Caco-2 (cell line): ENCODE measurements at regions of chr4 and their contacts with region 1.

Region 1: DNA sequence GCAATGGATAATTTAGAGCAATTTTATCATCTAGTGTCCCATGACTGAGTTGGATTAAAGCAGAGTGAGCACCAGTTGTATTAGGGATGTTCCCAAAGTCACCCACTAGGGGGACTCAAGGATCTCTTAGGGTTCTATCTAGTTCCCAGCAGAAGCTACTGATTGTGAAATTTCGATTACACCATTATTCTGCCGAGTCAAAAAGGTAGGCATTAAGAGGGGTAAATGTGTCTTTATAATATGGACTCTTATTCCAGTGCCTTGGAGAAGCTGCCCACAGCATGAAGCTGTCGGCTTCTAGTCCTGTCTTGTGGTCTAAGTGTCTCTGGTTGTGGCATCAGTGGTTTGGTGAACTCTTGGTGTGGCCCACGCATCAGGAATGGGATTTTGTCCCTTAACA is 53.3 kb downstream of the RGS12 start:
- DNase-seq: peak in 1 of 2 experiments; percentile 72
- H3K4me3 ChIP-seq: no peak overlapping the region
- H3K4me3 Mint-ChIP-seq: no peak overlapping the region
- H3K27ac Mint-ChIP-seq: no peak overlapping the region
- H3K4me1 ChIP-seq: no peaks in the 10 kb centered on the region
- H3K4me1 Mint-ChIP-seq: no peaks in the 10 kb centered on the region
- H3K27me3 ChIP-seq: no peaks in the 10 kb centered on the region
- H3K27me3 Mint-ChIP-seq: no peaks in the 10 kb centered on the region
- CTCF ChIP-seq: peak; percentile 69 to 77

Region 2: GRCh38 chr4:3442959-3443749 is 97.0 kb after region 1 on chr4:
- CTCF ChIA-PET with region 1: no interaction called
- POLR2A ChIA-PET with region 1: no interaction called
- intact Hi-C with region 1: loop called (anchors 1 kb)
- DNase-seq: peak in 1 of 2 experiments; percentile 69
- H3K4me3 ChIP-seq: no peak overlapping the region
- H3K4me3 Mint-ChIP-seq: no peak overlapping the region
- H3K27ac Mint-ChIP-seq: no peak overlapping the region
- H3K4me1 ChIP-seq: peaks cover 19% of the 10 kb centered on the region
- H3K4me1 Mint-ChIP-seq: no peaks in the 10 kb centered on the region
- H3K27me3 ChIP-seq: no peaks in the 10 kb centered on the region
- H3K27me3 Mint-ChIP-seq: no peaks in the 10 kb centered on the region
- CTCF ChIP-seq: peak; percentile 66 to 94

Region 3: DNA sequence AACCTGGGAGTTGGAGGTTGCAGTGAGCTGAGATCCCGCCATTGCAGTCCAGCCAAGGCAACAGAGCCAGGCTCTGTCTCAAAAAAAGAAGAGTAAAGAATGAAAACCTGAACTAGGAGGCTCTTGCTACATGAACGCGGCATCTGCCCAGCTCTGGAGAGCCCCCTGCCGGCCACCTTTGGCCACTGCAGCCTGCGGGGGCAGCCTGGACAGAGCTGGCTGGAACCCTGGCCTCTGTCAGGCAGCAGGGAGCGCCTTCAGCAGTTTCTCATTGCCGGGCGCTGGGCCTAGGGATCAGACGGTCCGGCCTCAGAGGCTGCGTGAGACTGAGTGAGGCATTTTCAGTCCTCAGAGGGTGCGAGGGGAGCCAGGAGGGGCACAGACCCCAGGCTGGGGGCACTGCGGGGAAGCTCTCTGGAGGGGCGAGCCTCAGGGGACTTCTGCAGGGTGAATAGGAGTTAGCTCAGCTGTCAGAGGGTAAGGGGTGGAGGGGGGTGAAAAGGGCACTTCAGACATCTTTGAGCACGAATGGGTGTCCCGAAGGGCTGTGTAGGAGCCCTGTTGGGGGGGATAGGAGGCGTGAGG is 134.5 kb after region 1 on chr4:
- CTCF ChIA-PET with region 1: interaction called, 25 read pairs
- POLR2A ChIA-PET with region 1: no interaction called
- intact Hi-C with region 1: loop called (anchors 1 kb)
- DNase-seq: peak; percentile 70 to 91
- H3K4me3 ChIP-seq: no peak overlapping the region
- H3K4me3 Mint-ChIP-seq: no peak overlapping the region
- H3K27ac Mint-ChIP-seq: peak overlapping the region; percentile 7
- H3K4me1 ChIP-seq: peaks cover 16% of the 10 kb centered on the region
- H3K4me1 Mint-ChIP-seq: no peaks in the 10 kb centered on the region
- H3K27me3 ChIP-seq: no peaks in the 10 kb centered on the region
- H3K27me3 Mint-ChIP-seq: peaks cover 3% of the 10 kb centered on the region
- CTCF ChIP-seq: peak; percentile 94 to 96